ENCODE measurements at regions of chr7 and their contacts with region 1.

Region 1: DNA sequence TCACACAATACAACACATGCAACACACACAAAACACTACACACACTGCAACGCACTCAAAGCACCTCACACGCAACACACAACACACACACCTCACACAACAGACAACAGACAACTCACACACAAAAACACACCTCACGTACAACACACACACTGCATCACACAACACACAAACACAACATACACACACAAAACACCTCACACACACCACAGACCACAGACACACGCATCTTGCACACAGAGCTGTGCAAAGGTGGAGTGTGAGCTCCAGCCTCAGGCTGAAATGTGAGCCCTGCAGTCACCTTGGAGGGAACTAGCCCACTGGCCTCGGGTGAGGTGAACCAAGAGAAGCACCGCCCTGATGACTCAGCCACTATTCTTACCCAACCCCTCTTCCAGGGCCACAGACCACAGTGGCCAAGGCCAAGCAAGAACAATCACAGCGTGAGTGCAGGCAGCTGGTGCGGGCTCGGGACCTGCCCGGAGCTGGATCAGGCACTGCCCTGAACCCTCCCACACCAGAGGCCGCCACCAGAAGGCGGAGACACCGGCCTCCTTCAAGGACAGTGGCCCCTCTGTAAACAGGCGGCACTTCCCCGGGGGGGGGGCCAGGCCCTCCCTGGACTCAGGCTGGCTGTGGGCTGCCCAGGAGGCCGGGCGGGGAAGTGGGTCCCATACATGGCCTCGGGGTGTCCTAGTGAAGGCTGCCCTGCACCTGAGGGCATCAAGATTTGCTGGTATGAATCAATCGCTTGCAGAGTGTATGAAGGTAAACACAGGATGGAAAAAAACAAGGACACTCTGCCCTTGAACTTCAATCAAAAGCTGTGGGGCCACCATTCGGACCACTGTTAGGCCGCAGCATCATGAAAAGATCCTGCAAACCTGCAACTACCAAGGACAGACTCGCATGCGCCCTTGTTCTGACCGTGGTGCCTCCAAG is 106.7 kb downstream of the TNS3 start:
- DNase-seq: peak; percentile 95
- H3K4me3 ChIP-seq: no peak overlapping the region
- H3K27ac ChIP-seq: no peak overlapping the region
- H3K4me1 ChIP-seq: peaks cover 21% of the 10 kb centered on the region
- H3K27me3 ChIP-seq: no peaks in the 10 kb centered on the region
- CTCF ChIP-seq: peak in 1 of 2 donors; percentile 0

Region 2: GRCh38 chr7:47327698-47328391 is 147.4 kb before region 1 on chr7:
- CTCF ChIA-PET with region 1: no interaction called
- dilution Hi-C with region 1: no loop called
- in situ Hi-C with region 1: no loop called
- intact Hi-C with region 1: no loop called
- DNase-seq: peak; percentile 62
- H3K4me3 ChIP-seq: peak overlapping the region; percentile 1 to 32 (median 27)
- H3K27ac ChIP-seq: peak overlapping the region; percentile 3
- H3K4me1 ChIP-seq: peaks cover 55% of the 10 kb centered on the region
- H3K27me3 ChIP-seq: no peaks in the 10 kb centered on the region
- CTCF ChIP-seq: no peak

Region 3: GRCh38 chr7:47581806-47582763 is 106.9 kb after region 1 on chr7 and contains the start of gene TNS3:
- CTCF ChIA-PET with region 1: no interaction called
- dilution Hi-C with region 1: no loop called
- in situ Hi-C with region 1: no loop called
- intact Hi-C with region 1: loop called (anchors 10 kb)
- DNase-seq: peak; percentile 47
- H3K4me3 ChIP-seq: peak within 1 kb of the TSS; percentile 78 to 81 (median 80)
- H3K27ac ChIP-seq: peak within 1 kb of the TSS; percentile 42
- H3K4me1 ChIP-seq: peaks cover 28% of the 10 kb centered on the region
- H3K27me3 ChIP-seq: no peaks in the 10 kb centered on the region
- CTCF ChIP-seq: peak in 1 of 2 donors; percentile 2
- total RNA-seq, gene TNS3: 15.0 to 43.5 TPM

Region 4: GRCh38 chr7:47914717-47915615 is 439.8 kb after region 1 on chr7:
- CTCF ChIA-PET with region 1: no interaction called
- dilution Hi-C with region 1: no loop called
- in situ Hi-C with region 1: no loop called
- intact Hi-C with region 1: no loop called
- DNase-seq: no peak
- H3K4me3 ChIP-seq: no peak overlapping the region
- H3K27ac ChIP-seq: no peak overlapping the region
- H3K4me1 ChIP-seq: no peaks in the 10 kb centered on the region
- H3K27me3 ChIP-seq: peaks cover 11% of the 10 kb centered on the region
- CTCF ChIP-seq: no peak

Measured in mammary epithelial cell (primary cell).